Left cardiac atrium (tissue), 4 donors: ENCODE measurements at regions of chr1 and their contacts with region 1.

Region 1: GRCh38 chr1:214123061-214123784 is 135.4 kb downstream of the PROX1 start:
- DNase-seq: no peak
- ATAC-seq: peak; percentile 90 to 94

Region 2: DNA sequence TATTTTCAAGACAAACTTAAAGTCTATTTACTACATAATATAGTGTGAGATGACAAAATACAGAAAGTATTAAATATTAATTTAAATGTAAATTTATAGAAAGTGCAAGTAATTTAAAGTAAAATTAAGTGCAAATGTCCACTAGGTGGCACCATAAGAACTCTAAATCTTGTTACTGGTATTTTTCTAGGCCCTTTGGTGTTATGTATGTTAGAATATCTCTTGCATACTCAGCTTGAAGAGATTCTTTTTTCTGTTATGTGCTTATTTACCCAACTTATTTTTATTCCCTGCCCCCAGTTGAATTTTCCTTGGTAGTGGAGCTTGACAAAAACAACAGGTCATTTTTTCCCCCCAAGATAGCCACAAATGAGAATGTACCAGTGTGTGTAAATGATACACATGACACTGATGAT is 1000.7 kb before region 1 on chr1:
- intact Hi-C with region 1: loop called in 1 of 2 experiments (anchors 5 kb)
- DNase-seq: no peak
- ATAC-seq: no peak

Region 3: GRCh38 chr1:213244664-213245091 is 878.5 kb before region 1 on chr1:
- intact Hi-C with region 1: loop called in 1 of 2 experiments (anchors 5 kb)
- DNase-seq: no peak
- ATAC-seq: no peak

Region 4: GRCh38 chr1:213374369-213374768 is 748.9 kb before region 1 on chr1:
- intact Hi-C with region 1: loop called (anchors 5 to 10 kb)
- DNase-seq: peak; percentile 52
- ATAC-seq: peak; percentile 77

Region 5: GRCh38 chr1:213564215-213564659 is 559.0 kb before region 1 on chr1:
- intact Hi-C with region 1: loop called in 1 of 2 experiments (anchors 10 kb)
- DNase-seq: no peak
- ATAC-seq: no peak

Region 6: GRCh38 chr1:214018386-214019268 is 104.6 kb before region 1 on chr1:
- intact Hi-C with region 1: no loop called
- DNase-seq: no peak
- ATAC-seq: no peak

Region 7: DNA sequence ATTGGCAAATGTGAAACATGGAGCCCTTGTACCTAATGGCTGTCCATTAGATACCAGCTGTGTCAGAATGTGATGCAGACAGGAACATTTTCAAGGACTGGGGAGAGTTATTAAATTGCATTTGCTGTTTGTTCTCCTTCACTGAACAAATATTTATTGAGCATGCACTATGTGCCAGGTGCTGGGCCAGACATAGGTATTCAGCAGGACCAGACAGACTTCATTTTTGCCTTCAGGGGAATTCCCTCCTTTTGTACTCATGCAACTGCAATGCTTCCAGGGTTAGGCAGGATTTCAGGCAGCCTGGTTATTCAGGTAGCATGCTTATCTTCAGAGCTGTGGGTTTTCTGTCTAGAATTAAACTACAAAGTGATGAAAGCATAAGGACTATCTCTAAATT is 93.6 kb after region 1 on chr1:
- intact Hi-C with region 1: no loop called
- DNase-seq: no peak
- ATAC-seq: no peak

Region 8: DNA sequence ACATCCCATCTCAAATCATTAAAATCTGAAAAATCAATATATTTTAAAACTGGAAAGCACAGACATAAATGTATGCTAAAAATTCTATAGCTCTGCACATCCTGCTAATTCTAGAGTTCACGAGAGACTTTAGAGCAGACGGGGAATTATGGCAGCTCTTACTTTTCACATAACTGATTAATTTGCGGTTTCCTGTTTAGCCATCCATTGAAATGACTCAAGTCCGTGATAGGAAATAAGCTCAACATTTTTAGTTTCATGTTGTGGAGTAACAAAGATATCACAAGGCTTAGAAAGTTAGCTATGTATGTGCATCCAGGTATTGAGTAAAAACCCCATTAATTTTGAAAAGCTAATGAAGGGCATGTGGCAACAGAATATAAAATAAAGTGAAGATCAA is 280.9 kb after region 1 on chr1:
- intact Hi-C with region 1: no loop called
- DNase-seq: no peak
- ATAC-seq: no peak